Sciatic nerve (tissue), 2 donors: ENCODE measurements at regions of chr9 and their contacts with region 1.

Region 1: GRCh38 chr9:33106827-33107621 is 30.6 kb upstream of the SMU1 start:
- DNase-seq: no peak
- ATAC-seq: peak; percentile 71

Region 2: GRCh38 chr9:33167046-33167808 is 60.2 kb after region 1 on chr9 and contains the start of gene B4GALT1:
- intact Hi-C with region 1: loop called (anchors 10 kb)
- DNase-seq: peak; percentile 98
- ATAC-seq: peak; percentile 73
- total RNA-seq, gene B4GALT1: 85.3 TPM